ENCODE measurements at regions of chr11 and their contacts with region 1.

Region 1: GRCh38 chr11:96554236-96554820 is 164.5 kb downstream of the JRKL start:
- DNase-seq: no peak
- H3K4me3 Mint-ChIP-seq: no peak overlapping the region
- H3K27ac Mint-ChIP-seq: no peak overlapping the region
- H3K4me1 Mint-ChIP-seq: no peaks in the 10 kb centered on the region
- H3K27me3 Mint-ChIP-seq: no peaks in the 10 kb centered on the region

Region 2: DNA sequence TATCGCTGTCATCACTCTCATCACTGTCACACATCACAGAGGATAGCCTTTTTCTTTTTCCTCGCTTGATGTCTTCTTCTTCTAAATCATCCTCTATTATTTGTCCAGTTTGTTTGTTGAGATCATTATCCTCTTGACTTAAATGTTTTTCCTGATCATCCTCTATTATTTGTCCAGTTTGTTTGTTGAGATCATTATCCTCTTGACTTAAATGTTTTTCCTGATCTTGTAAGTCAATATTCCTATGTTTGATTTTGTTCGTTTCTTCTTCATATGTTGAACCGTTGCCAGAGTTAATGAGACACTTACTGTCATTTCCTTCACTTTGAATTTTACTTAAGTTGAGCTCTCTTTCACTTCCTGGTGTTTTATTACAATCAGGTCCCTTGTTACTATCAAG is 170.2 kb before region 1 on chr11:
- intact Hi-C with region 1: no loop called
- DNase-seq: no peak
- H3K4me3 Mint-ChIP-seq: peak overlapping the region; percentile 70
- H3K27ac Mint-ChIP-seq: peak overlapping the region; percentile 41
- H3K4me1 Mint-ChIP-seq: peaks cover 43% of the 10 kb centered on the region
- H3K27me3 Mint-ChIP-seq: no peaks in the 10 kb centered on the region

Region 3: DNA sequence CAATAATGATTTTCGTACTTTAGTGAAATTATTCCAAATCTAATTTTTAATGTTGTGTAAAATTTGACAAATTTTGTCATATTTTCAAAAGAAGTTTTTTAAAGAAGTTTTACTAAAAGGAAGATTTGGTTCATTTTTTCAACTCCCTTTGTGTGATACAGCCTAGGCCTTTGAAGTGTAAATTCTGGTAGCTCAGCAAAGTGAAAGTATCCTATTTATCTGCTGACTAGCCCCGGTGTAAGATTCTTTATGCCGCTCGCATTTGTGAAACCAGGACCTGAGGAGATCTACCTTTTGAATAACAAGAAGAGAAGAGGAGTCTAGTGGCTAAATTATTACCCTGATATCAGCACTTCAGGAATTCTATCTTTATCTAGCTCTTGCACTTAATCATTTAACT is 12.8 kb after region 1 on chr11:
- intact Hi-C with region 1: loop called (anchors 2 kb)
- DNase-seq: peak; percentile 72
- H3K4me3 Mint-ChIP-seq: no peak overlapping the region
- H3K27ac Mint-ChIP-seq: no peak overlapping the region
- H3K4me1 Mint-ChIP-seq: no peaks in the 10 kb centered on the region
- H3K27me3 Mint-ChIP-seq: no peaks in the 10 kb centered on the region

Region 4: DNA sequence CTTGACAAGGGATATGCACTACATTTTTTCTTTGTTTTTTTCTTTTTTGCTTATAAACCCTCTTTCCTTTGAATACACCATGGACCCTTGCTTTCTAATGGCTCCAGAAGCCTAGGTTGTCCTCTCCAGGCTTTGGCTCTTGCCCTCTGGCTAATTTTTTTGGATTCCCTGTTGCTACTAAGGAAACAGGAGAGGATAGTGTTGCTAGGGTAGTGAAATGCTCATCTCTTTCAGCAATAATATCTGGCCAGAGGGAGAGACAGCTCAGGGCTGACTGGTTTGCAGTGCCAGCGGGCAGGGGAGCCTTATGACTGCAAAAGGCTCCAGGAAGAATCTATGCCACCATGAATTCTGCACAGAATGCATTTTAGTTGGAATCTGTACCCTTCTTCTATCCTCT is 51.6 kb after region 1 on chr11:
- intact Hi-C with region 1: no loop called
- DNase-seq: no peak
- H3K4me3 Mint-ChIP-seq: no peak overlapping the region
- H3K27ac Mint-ChIP-seq: no peak overlapping the region
- H3K4me1 Mint-ChIP-seq: no peaks in the 10 kb centered on the region
- H3K27me3 Mint-ChIP-seq: no peaks in the 10 kb centered on the region